BJ (cell line): ENCODE measurements at regions of chr6 and their contacts with region 1.

Region 1: DNA sequence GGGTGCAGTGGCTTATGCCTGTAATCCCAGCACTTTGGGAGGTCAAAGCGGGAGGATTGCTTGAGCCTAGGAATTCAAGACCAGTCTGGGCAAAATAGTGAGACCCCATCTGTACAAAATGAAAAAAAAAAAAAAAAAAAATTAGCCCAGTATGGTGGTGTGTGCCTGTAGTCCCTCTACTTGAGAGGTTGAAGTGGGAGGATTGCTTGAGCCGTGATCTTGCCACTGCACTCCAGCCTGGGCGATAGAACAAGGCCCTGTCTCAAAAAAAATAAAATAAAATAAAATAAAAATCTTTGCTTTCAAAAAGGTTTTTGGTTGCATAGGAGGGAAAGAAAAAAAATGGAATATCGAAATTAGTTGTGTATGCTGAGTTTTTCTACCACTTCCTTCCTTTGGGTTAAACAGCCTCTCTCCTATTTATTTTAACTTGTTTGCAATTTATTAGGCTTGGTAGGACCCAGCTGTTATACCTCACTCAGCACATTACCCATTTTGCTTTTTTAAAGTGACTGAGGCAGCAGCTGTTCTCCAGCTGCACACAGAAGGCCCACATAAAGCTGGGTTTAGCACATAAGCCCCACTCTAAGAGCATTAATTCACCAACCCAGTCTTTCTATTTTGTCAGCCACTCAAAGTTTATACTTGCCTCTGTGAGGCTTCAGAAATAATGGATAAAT is 152.3 kb downstream of the ZFAND3 start:
- DNase-seq: no peak
- H3K4me3 ChIP-seq: no peak overlapping the region
- H3K27me3 ChIP-seq: no peaks in the 10 kb centered on the region
- CTCF ChIP-seq: no peak

Region 2: DNA sequence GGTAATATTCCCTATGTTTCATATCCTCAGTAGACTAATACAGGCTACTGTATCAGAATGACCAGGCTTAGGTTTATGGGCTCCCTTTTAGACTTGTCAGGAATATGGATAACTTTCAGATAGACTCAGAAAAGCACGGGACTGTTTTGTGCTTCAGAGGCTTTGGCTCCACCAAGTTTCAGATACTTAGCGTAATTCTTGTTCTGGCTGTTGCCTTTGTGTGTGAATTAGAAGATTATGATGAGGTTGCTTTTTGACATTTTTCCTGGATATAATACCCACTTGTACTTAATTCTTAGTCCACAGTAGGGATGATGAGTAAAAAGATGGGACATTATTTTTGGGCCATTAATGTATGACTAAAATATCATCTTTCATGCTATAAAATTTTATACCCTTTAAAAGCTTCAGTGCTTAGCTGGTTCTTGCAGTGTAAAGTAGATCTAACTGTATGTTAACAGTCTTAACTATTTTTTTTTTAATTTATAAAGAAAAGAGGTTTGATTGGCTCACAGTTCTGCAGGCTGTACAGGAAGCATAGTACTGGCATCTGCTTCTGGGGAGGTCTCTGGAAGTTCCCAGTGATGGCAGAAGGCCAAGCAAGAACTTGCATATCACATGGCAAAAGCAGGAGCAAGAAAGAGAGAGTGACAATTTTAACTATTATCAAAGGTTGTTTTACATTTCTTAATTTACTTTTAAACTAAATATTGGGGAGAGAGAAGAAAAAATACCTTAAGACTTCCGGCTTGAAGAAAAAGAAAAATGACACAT is 31.6 kb before region 1 on chr6:
- CTCF ChIA-PET with region 1: no interaction called
- POLR2A ChIA-PET with region 1: interaction called, 12 read pairs
- DNase-seq: no peak
- H3K4me3 ChIP-seq: no peak overlapping the region
- H3K27me3 ChIP-seq: no peaks in the 10 kb centered on the region
- CTCF ChIP-seq: no peak

Region 3: DNA sequence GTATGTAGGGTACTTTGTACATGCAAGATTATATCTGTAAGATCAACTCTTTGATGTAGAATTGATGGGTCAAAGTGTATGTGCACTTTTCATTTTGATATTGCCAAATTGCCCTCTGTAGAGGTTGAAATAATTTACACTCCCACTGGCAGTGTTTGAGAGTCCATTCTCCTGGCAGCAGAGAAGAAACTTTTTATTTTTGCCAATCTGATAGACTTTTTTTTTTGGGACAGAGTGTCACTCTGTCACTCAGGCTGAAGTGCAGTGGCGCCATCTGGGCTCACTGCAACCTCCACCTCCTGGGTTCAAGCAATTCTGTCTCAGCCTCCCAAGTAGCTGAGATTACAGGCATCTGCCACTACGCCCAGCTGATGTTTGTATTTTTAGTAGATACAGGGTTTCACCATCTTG is 46.9 kb after region 1 on chr6:
- CTCF ChIA-PET with region 1: no interaction called
- POLR2A ChIA-PET with region 1: no interaction called
- DNase-seq: no peak
- H3K4me3 ChIP-seq: no peak overlapping the region
- H3K27me3 ChIP-seq: no peaks in the 10 kb centered on the region
- CTCF ChIP-seq: no peak